Activated CD8-positive, alpha-beta memory T cell treated with anti-CD3 and anti-CD28 coated beads, Interleukin-2, amount 10 ng/mL, durations not matched to agents 7 days and 5 days (primary cell): ENCODE measurements at regions of chr19 and their contacts with region 1.

Region 1: GRCh38 chr19:17266975-17267788 is at the start of gene BABAM1:
- DNase-seq: peak; percentile 99
- ATAC-seq: peak; percentile 97
- H3K4me3 Mint-ChIP-seq: peak within 1 kb of the TSS; percentile 91
- H3K27ac Mint-ChIP-seq: peak within 1 kb of the TSS; percentile 78
- H3K4me1 Mint-ChIP-seq: peaks cover 25% of the 10 kb centered on the region
- H3K27me3 Mint-ChIP-seq: no peaks in the 10 kb centered on the region
- total RNA-seq, gene BABAM1: 113 to 117 TPM

Region 2: GRCh38 chr19:17282488-17283255 is 15.5 kb after region 1 on chr19:
- CTCF ChIA-PET with region 1: interaction called, 132 read pairs
- DNase-seq: peak; percentile 87
- ATAC-seq: peak; percentile 90
- H3K4me3 Mint-ChIP-seq: peak overlapping the region; percentile 79
- H3K27ac Mint-ChIP-seq: peak overlapping the region; percentile 72
- H3K4me1 Mint-ChIP-seq: peaks cover 6% of the 10 kb centered on the region
- H3K27me3 Mint-ChIP-seq: no peaks in the 10 kb centered on the region

Region 3: GRCh38 chr19:17327651-17328516 is 60.7 kb after region 1 on chr19:
- CTCF ChIA-PET with region 1: no interaction called
- DNase-seq: no peak
- ATAC-seq: peak; percentile 64
- H3K4me3 Mint-ChIP-seq: peak overlapping the region; percentile 22
- H3K27ac Mint-ChIP-seq: no peak overlapping the region
- H3K4me1 Mint-ChIP-seq: peaks cover 8% of the 10 kb centered on the region
- H3K27me3 Mint-ChIP-seq: peaks cover 20% of the 10 kb centered on the region